ENCODE measurements at regions of chr17 and their contacts with region 1.

Region 1: DNA sequence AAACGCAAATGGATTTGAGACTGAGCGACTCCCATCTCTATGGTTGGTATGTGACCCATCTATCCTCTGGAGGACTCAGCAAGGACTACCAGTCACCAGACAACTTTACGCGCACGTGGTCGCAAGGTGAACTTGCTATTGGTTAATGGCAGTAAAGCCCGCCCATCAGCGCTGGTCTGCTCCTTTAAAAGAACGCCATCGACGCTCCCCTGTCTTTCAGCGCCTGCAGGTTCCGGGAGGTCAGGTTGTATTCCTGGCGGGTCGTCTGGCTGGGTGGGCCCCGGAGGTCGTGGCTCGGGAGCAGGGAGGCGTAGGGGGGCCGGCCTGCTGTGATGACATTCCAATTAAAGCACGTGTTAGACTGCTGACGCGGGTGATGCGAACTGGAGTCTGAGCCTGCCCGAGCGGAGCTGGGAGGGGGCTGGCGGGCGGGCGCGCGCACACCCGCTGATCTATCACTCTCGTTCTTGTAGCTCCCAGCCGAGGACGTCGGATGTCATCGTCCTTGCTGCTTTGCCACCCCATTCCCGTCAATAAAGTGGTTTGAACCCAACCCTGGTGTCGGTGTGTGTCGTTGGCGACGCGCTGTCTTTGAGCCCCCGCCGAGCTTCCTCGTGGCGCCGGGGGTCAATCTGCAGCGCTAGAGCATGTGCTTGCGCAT is 15.9 kb upstream of the ERN1 start:
- DNase-seq: peak; percentile 96
- H3K4me3 Mint-ChIP-seq: no peak overlapping the region
- H3K27ac Mint-ChIP-seq: no peak overlapping the region
- H3K4me1 Mint-ChIP-seq: peaks cover 25% of the 10 kb centered on the region
- H3K27me3 Mint-ChIP-seq: no peaks in the 10 kb centered on the region

Region 2: DNA sequence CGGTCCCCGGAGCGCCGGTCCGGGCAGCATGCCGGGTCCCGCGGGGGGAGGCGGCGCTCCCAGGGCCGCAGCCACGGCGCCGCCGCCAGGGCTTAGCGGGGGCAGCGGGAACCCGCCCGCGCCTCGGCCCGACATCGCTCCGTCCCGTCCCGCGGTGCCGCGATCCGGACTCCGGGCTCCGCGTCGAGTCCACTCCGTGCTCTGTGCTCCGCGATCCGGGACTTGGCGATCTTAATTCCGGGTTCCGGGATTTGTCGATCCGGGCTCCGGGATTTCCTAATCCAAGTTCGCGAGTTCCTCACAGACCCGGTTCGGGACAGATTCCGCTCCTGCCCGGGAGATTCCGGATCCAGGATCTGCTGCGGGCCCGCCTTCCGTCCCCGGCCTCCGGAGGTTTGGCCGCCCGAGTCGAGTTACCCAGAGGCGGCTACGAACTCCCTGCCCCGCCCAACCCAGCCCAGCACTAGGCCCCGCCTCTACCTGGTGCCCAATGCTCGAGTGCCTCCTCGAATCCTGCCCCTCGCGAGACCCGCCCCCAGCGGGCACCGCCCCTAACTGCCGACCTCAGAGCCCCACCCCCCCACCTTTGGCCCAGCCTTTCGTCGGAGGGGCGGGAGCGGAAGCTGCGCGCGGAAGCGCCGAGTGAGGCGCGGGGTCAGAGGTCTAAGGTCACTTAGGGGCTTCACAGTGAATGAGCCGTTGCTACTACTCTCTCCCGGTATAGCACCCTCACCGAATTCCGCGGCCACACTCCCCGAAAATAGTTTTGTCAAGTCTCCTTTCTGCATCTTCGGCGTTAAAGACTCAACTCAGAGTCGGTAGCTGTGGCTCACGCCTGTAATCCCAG is 303.1 kb before region 1 on chr17 and contains the start of gene SMARCD2:
- CTCF ChIA-PET with region 1: no interaction called
- POLR2A ChIA-PET with region 1: interaction called, 10 read pairs
- DNase-seq: peak; percentile 99
- H3K4me3 Mint-ChIP-seq: peak within 1 kb of the TSS; percentile 97
- H3K27ac Mint-ChIP-seq: peak within 1 kb of the TSS; percentile 96
- H3K4me1 Mint-ChIP-seq: peaks cover 46% of the 10 kb centered on the region
- H3K27me3 Mint-ChIP-seq: no peaks in the 10 kb centered on the region
- total RNA-seq, gene SMARCD2: 150 to 152 TPM

Region 3: DNA sequence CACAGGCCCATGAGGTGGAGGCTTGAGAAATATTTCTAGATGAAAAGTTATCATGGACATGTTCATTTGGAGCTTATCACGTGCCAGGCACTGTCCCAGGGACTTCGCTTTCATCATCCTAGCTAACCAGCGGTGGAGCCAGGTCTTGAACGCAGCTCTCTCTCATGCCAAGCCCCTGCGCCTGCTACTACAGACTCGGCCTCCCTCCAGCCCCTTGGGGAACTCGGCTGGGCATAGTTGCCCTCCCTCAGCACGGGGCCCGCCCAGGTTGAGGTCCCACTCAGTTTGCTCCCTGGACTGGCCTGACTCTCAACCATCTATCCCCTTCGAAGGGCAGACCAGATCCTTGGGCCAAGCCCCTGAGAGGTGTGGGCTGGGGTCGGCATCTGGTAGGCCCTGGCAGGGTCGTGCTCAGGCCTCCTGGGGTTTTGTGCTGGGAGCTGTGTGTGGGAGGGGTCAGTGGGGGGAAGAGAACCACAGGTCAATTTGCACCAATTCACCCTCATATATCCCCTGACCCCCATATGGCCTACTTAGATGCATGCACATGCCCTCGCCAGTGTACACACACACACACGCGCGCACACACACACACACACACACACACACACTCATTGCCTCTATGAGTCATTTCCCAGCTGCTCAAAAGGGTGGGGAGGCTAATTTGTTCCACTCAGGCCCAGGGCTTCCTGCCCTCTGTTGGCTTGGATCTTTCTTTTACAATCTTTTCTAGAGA is 161.1 kb before region 1 on chr17:
- CTCF ChIA-PET with region 1: interaction called, 5 read pairs
- POLR2A ChIA-PET with region 1: interaction called, 16 read pairs
- DNase-seq: peak; percentile 79
- H3K4me3 Mint-ChIP-seq: no peak overlapping the region
- H3K27ac Mint-ChIP-seq: peak overlapping the region; percentile 85
- H3K4me1 Mint-ChIP-seq: peaks cover 35% of the 10 kb centered on the region
- H3K27me3 Mint-ChIP-seq: no peaks in the 10 kb centered on the region

Region 4: GRCh38 chr17:64051153-64051552 is 94.7 kb before region 1 on chr17:
- CTCF ChIA-PET with region 1: no interaction called
- POLR2A ChIA-PET with region 1: interaction called, 16 read pairs
- DNase-seq: peak; percentile 34
- H3K4me3 Mint-ChIP-seq: peak overlapping the region; percentile 18
- H3K27ac Mint-ChIP-seq: peak overlapping the region; percentile 90
- H3K4me1 Mint-ChIP-seq: peaks cover 57% of the 10 kb centered on the region
- H3K27me3 Mint-ChIP-seq: no peaks in the 10 kb centered on the region

Region 5: GRCh38 chr17:64155751-64156544 is 10.1 kb after region 1 on chr17:
- CTCF ChIA-PET with region 1: no interaction called
- POLR2A ChIA-PET with region 1: interaction called, 20 read pairs
- DNase-seq: no peak
- H3K4me3 Mint-ChIP-seq: no peak overlapping the region
- H3K27ac Mint-ChIP-seq: no peak overlapping the region
- H3K4me1 Mint-ChIP-seq: no peaks in the 10 kb centered on the region
- H3K27me3 Mint-ChIP-seq: no peaks in the 10 kb centered on the region

Region 6: GRCh38 chr17:64262417-64263260 is 116.8 kb after region 1 on chr17 and contains the start of gene TEX2:
- CTCF ChIA-PET with region 1: interaction called, 3 read pairs
- POLR2A ChIA-PET with region 1: interaction called, 38 read pairs
- DNase-seq: peak; percentile 70
- H3K4me3 Mint-ChIP-seq: peak within 1 kb of the TSS; percentile 82
- H3K27ac Mint-ChIP-seq: peak within 1 kb of the TSS; percentile 74
- H3K4me1 Mint-ChIP-seq: peaks cover 31% of the 10 kb centered on the region
- H3K27me3 Mint-ChIP-seq: peaks cover 15% of the 10 kb centered on the region
- total RNA-seq, gene TEX2: 10.5 to 12.4 TPM

Region 7: GRCh38 chr17:64506576-64507477 is 360.9 kb after region 1 on chr17 and contains the start of gene CEP95:
- CTCF ChIA-PET with region 1: no interaction called
- POLR2A ChIA-PET with region 1: interaction called, 10 read pairs
- DNase-seq: peak; percentile 95
- H3K4me3 Mint-ChIP-seq: peak within 1 kb of the TSS; percentile 99
- H3K27ac Mint-ChIP-seq: peak within 1 kb of the TSS; percentile 100
- H3K4me1 Mint-ChIP-seq: peaks cover 56% of the 10 kb centered on the region
- H3K27me3 Mint-ChIP-seq: no peaks in the 10 kb centered on the region
- total RNA-seq, gene CEP95: 47.7 to 48.5 TPM

Measured in activated CD4-positive, alpha-beta memory T cell treated with anti-CD3 and anti-CD28 coated beads, Interleukin-2, amount 10 ng/mL, durations not matched to agents 7 days and 5 days (primary cell).